MCF 10A (cell line): ENCODE measurements at regions of chr15 and their contacts with region 1.

Region 1: DNA sequence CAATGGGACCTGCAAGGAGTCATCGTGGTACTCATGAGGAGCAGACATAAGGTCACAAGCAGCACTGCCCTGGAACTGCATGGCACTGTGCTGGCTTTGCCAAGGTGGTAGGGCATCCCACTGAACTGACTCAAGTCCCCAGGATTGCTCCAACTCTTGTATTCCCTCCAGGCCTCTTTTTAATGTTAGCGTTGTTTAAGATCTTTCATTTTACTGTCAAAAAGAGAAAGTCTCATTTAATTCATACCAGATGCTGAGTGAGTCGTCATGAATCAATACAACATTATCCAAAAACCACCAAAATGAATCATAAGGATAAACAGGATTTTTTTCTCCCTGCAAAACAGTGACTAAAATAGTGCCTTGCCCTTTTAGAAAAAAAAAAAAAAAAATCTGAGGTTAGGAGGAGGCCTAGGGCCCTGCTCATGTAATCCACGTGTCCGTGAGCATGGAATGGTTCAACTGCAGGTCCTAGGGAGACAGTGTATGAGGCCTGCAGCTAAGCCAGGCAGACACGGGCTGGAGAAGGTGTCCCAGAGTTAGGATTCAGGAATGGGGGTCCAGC is 36.7 kb upstream of the BLM start:
- DNase-seq: peak; percentile 76
- H3K4me3 Mint-ChIP-seq: peak overlapping the region; percentile 39
- H3K27ac Mint-ChIP-seq: peak overlapping the region; percentile 90
- H3K4me1 Mint-ChIP-seq: peaks cover 26% of the 10 kb centered on the region
- H3K27me3 Mint-ChIP-seq: no peaks in the 10 kb centered on the region
- CTCF ChIP-seq: no peak

Region 2: GRCh38 chr15:90471769-90472168 is 208.7 kb before region 1 on chr15:
- CTCF ChIA-PET with region 1: no interaction called
- POLR2A ChIA-PET with region 1: no interaction called
- intact Hi-C with region 1: no loop called
- DNase-seq: no peak
- H3K4me3 Mint-ChIP-seq: no peak overlapping the region
- H3K27ac Mint-ChIP-seq: no peak overlapping the region
- H3K4me1 Mint-ChIP-seq: no peaks in the 10 kb centered on the region
- H3K27me3 Mint-ChIP-seq: no peaks in the 10 kb centered on the region
- CTCF ChIP-seq: no peak

Region 3: DNA sequence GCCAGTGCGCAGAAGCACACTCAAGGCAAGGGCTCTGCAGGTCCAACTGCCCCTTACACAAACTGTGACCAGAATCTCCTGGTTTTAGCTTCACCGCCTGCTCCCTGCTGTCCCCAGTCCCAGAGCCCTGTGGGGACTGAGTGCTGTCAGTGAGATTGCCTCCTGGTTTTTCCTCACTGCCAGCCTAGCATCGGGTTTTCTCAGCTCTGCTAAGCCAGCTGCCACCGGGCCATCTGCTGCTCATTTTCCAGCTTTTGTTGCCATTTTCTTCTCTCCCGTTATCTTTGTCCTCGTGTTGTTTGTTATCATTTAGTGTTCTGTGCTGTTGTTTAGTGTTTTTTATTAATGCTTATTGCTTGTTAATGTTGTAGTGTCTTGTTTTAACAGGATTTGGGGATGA is 42.8 kb before region 1 on chr15:
- CTCF ChIA-PET with region 1: no interaction called
- POLR2A ChIA-PET with region 1: no interaction called
- intact Hi-C with region 1: no loop called
- DNase-seq: no peak
- H3K4me3 Mint-ChIP-seq: no peak overlapping the region
- H3K27ac Mint-ChIP-seq: no peak overlapping the region
- H3K4me1 Mint-ChIP-seq: no peaks in the 10 kb centered on the region
- H3K27me3 Mint-ChIP-seq: no peaks in the 10 kb centered on the region
- CTCF ChIP-seq: no peak

Region 4: DNA sequence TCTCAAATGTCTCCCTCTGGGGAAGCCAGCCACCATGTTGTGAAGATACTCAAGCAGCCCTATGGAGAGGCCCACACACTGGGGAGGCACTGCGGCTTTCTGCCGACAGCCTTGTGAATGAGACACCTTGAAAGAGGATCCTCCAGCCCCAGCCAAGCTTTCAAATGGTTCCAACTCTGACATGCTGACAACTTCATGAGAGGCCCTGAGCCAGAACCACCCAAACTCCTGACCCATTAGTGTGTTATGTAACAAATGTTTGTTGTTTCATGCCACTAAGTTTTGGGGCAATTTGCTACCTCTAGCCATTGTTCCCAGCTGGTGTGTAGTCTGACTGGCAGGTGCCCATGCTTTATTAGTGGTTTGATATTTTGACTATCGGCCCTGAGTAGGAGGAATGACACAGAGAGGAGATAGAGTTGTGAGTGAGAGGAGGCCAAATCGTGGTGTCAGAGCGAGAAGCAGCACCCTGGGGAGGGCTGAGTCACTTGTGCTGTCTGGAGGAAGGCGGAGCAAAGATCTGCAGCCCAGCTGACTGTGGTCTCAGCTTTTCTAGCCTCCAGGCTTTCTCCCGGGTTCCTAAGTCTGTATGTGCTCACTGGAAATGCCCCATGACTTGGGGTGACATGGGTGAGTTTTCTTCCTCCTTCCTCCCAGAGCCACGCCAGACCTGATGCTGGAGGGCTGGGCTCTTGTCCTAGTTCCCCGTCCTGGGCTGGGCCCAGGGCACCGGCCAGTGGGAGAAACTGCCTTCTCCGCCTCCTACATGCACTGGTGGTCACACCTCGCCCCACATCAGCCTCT is 20.1 kb before region 1 on chr15:
- CTCF ChIA-PET with region 1: no interaction called
- POLR2A ChIA-PET with region 1: interaction called, 31 read pairs
- intact Hi-C with region 1: loop called (anchors 1 kb)
- DNase-seq: peak; percentile 89
- H3K4me3 Mint-ChIP-seq: peak overlapping the region; percentile 68
- H3K27ac Mint-ChIP-seq: peak overlapping the region; percentile 86
- H3K4me1 Mint-ChIP-seq: peaks cover 34% of the 10 kb centered on the region
- H3K27me3 Mint-ChIP-seq: no peaks in the 10 kb centered on the region
- CTCF ChIP-seq: no peak

Region 5: GRCh38 chr15:90665288-90666134 is 14.9 kb before region 1 on chr15:
- CTCF ChIA-PET with region 1: interaction called, 4 read pairs
- POLR2A ChIA-PET with region 1: interaction called, 31 read pairs
- intact Hi-C with region 1: loop called (anchors 1 kb)
- DNase-seq: peak; percentile 68
- H3K4me3 Mint-ChIP-seq: peak overlapping the region; percentile 73
- H3K27ac Mint-ChIP-seq: peak overlapping the region; percentile 86
- H3K4me1 Mint-ChIP-seq: peaks cover 35% of the 10 kb centered on the region
- H3K27me3 Mint-ChIP-seq: no peaks in the 10 kb centered on the region
- CTCF ChIP-seq: no peak

Region 6: GRCh38 chr15:91561371-91562100 is 881.1 kb after region 1 on chr15:
- CTCF ChIA-PET with region 1: no interaction called
- POLR2A ChIA-PET with region 1: no interaction called
- intact Hi-C with region 1: no loop called
- DNase-seq: peak; percentile 90
- H3K4me3 Mint-ChIP-seq: peak overlapping the region; percentile 55
- H3K27ac Mint-ChIP-seq: peak overlapping the region; percentile 95
- H3K4me1 Mint-ChIP-seq: peaks cover 16% of the 10 kb centered on the region
- H3K27me3 Mint-ChIP-seq: no peaks in the 10 kb centered on the region
- CTCF ChIP-seq: no peak